ENCODE measurements at regions of chr7 and their contacts with region 1.

Region 1: GRCh38 chr7:95545078-95545498 is 51.2 kb downstream of the PDK4 start:
- DNase-seq: peak in 1 of 2 donors; percentile 69
- ATAC-seq: peak; percentile 76 to 92 (median 84)
- H3K4me3 ChIP-seq: peak overlapping the region in 8 of 10 donors; percentile 18 to 55 (median 45)
- H3K27ac ChIP-seq: peak overlapping the region; percentile 42 to 89 (median 70)
- H3K4me1 ChIP-seq: peaks cover 9 to 54% (median 42%) of the 10 kb centered on the region in 9 donors
- H3K27me3 ChIP-seq: no peaks in the 10 kb centered on the region
- CTCF ChIP-seq: peak; percentile 50 to 89 (median 78)

Region 2: GRCh38 chr7:95421000-95421846 is 123.9 kb before region 1 on chr7:
- intact Hi-C with region 1: no loop called
- DNase-seq: no peak
- ATAC-seq: peak in 1 of 8 donors; percentile 53
- H3K4me3 ChIP-seq: no peak overlapping the region
- H3K27ac ChIP-seq: no peak overlapping the region
- H3K4me1 ChIP-seq: peaks cover 0 to 12% (median 0%) of the 10 kb centered on the region in 9 donors
- H3K27me3 ChIP-seq: no peaks in the 10 kb centered on the region
- CTCF ChIP-seq: no peak

Region 3: GRCh38 chr7:95582578-95583293 is 37.6 kb after region 1 on chr7:
- intact Hi-C with region 1: loop called in 2 of 10 experiments (anchors 2 to 5 kb)
- DNase-seq: no peak
- ATAC-seq: peak in 6 of 8 donors; percentile 43 to 73 (median 60)
- H3K4me3 ChIP-seq: no peak overlapping the region
- H3K27ac ChIP-seq: peak overlapping the region in 1 of 10 donors; percentile 11
- H3K4me1 ChIP-seq: peaks cover 0 to 22% (median 9%) of the 10 kb centered on the region in 9 donors
- H3K27me3 ChIP-seq: no peaks in the 10 kb centered on the region
- CTCF ChIP-seq: no peak

Region 4: GRCh38 chr7:95590387-95591248 is 45.5 kb after region 1 on chr7:
- intact Hi-C with region 1: loop called in 5 of 10 experiments (anchors 5 kb)
- DNase-seq: no peak
- ATAC-seq: peak in 3 of 8 donors; percentile 2 to 27 (median 8)
- H3K4me3 ChIP-seq: peak overlapping the region in 6 of 10 donors; percentile 47 to 91 (median 78)
- H3K27ac ChIP-seq: peak overlapping the region in 9 of 10 donors; percentile 9 to 99 (median 45)
- H3K4me1 ChIP-seq: peaks cover 0 to 93% (median 65%) of the 10 kb centered on the region in 9 donors
- H3K27me3 ChIP-seq: no peaks in the 10 kb centered on the region
- CTCF ChIP-seq: no peak

Region 5: DNA sequence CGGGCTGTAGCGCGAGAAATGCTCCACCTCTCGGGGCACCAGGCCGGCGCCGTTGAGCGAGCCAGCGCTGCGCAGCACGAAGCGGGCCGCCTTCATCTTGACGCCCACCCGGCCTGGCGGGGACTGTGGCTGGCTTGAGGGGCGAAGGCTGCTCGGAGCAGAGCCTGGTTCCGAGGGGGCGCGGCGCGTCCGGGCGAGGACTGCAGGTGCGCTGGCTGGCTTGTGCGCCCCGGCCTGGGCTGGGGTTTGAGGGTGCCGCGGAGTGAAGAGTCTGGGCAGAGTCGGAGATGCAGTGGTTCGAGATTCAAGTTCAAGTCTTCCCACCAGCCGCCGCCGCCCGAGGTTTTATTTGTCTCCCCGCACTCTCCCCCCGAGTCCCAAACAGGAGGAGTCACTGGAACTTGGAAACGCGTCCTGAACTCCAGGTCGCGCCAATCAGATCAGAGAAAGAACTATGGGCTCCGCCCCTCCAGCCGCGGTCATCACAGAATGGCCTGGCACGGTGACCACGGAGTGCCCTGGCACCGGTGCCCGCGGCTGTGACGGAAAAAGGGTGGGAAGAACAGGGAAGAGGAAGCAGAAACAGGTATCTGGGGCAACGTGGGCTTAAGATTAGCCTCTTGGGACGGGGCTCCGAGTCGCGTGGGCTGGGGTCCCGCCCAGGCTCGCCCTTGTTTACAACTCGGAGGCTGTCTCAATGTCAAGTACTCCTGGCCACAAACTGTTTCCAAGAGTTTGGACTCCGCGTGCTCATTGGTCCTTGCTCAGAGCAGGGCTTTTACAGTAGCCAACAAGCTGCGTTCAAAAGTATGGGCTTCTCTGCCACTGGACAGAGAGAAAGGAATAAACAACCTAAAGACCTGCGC is 51.3 kb after region 1 on chr7 and contains the start of gene PDK4:
- intact Hi-C with region 1: loop called in 9 of 10 experiments (anchors 1 to 10 kb)
- DNase-seq: peak; percentile 93 to 95
- ATAC-seq: peak; percentile 87 to 98 (median 96)
- H3K4me3 ChIP-seq: peak within 1 kb of the TSS; percentile 47 to 91 (median 80)
- H3K27ac ChIP-seq: peak within 1 kb of the TSS; percentile 89 to 99 (median 94)
- H3K4me1 ChIP-seq: peaks cover 0 to 70% (median 51%) of the 10 kb centered on the region in 9 donors
- H3K27me3 ChIP-seq: no peaks in the 10 kb centered on the region
- CTCF ChIP-seq: no peak
- total RNA-seq, gene PDK4: 63.0 to 2,183 (median 269) TPM

Region 6: GRCh38 chr7:95608359-95609173 is 63.5 kb after region 1 on chr7:
- intact Hi-C with region 1: loop called in 4 of 10 experiments (anchors 1 to 10 kb)
- DNase-seq: peak; percentile 89 to 95
- ATAC-seq: peak; percentile 97 to 100 (median 99)
- H3K4me3 ChIP-seq: peak overlapping the region in 6 of 10 donors; percentile 27 to 41 (median 35)
- H3K27ac ChIP-seq: peak overlapping the region; percentile 60 to 96 (median 88)
- H3K4me1 ChIP-seq: peaks cover 4 to 77% (median 46%) of the 10 kb centered on the region in 9 donors
- H3K27me3 ChIP-seq: no peaks in the 10 kb centered on the region
- CTCF ChIP-seq: no peak

Region 7: GRCh38 chr7:95684037-95684436 is 138.9 kb after region 1 on chr7:
- intact Hi-C with region 1: loop called in 9 of 10 experiments (anchors 1 to 5 kb)
- DNase-seq: peak in 1 of 2 donors; percentile 14
- ATAC-seq: peak in 6 of 8 donors; percentile 31 to 75 (median 72)
- H3K4me3 ChIP-seq: no peak overlapping the region
- H3K27ac ChIP-seq: no peak overlapping the region
- H3K4me1 ChIP-seq: peaks cover 0 to 33% (median 3%) of the 10 kb centered on the region in 9 donors
- H3K27me3 ChIP-seq: no peaks in the 10 kb centered on the region
- CTCF ChIP-seq: peak; percentile 30 to 81 (median 61)

Region 8: DNA sequence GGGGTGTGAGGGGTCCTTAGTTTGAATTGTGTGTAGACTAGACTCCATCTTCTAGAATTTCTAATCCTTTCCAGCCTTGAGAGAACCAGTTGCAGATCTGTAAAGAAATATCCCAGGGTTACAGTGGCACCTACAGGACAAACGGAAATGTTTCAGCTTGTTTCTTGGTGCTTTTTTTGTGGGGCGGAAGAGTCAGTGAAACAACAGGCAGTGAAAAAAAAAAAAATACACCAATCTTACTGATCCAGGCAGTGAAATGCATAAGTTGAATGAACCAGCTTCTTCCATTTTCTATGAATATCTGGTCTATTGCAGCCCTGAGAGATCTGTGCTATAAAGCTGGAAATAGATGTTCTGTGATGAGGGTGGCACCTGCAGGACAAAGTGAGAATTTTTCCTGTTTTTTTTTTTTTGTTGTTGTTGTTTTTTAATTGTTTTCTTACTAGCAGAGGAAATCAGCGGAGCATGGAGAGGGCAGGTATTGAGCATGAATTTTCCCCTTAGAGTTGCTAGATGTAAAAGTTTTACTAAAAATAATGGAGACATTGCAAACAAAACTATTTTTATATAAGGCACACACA is 145.4 kb after region 1 on chr7:
- intact Hi-C with region 1: loop called in 5 of 10 experiments (anchors 2 to 5 kb)
- DNase-seq: peak in 1 of 2 donors; percentile 16
- ATAC-seq: peak; percentile 36 to 82 (median 61)
- H3K4me3 ChIP-seq: peak overlapping the region in 2 of 10 donors; percentile 3 to 33
- H3K27ac ChIP-seq: no peak overlapping the region
- H3K4me1 ChIP-seq: peaks cover 0 to 8% (median 0%) of the 10 kb centered on the region in 9 donors
- H3K27me3 ChIP-seq: no peaks in the 10 kb centered on the region
- CTCF ChIP-seq: peak; percentile 35 to 77 (median 60)

Measured in heart right ventricle (tissue), 16 donors.